ENCODE measurements at regions of chr12 and their contacts with region 1.

Region 1: DNA sequence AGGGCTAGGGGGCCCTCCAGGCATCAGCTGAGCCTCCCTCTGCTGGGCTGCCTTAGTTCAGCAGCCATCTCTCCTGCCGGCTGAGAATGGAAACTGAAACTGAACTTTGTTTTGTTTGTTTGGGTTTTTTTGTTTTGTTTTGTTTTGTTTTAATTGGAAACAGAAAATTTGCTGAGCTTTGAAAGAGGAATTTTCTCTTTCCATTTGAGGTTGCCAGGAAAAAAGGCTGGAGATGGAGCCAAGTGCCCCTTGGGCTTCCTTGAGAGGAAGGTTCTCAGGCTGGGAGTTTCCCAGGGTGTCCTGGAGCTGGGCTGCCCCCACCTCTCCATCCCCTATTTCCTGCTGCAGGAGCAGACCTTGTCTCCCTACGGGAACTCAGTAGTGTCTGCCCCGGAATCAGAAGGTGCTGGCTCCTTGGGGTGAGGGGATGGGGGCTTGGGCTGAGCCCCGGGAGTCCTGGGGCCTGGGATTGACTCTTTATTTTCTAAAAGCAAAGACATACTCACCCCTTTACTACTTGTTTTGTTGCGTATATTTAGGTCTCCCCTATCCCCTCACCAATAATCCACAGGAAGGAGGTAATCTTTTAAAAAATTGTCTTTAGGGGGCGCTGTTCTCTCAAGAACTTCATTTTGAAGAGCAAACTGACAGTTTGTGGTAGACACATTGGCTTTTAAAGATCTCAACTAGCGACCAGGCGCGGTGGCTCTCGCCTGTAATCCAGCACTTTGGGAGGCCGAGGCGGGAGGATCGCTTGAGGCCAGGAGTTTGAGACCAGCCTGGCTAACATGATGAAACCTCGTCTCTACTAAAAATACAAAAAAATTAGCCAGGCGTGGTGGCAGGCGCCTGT is 21.3 kb upstream of the OASL start:
- DNase-seq: peak; percentile 65
- H3K4me3 Mint-ChIP-seq: peak overlapping the region; percentile 74
- H3K27ac Mint-ChIP-seq: peak overlapping the region; percentile 93
- H3K4me1 Mint-ChIP-seq: peaks cover 30% of the 10 kb centered on the region
- H3K27me3 Mint-ChIP-seq: peaks cover 2% of the 10 kb centered on the region

Region 2: DNA sequence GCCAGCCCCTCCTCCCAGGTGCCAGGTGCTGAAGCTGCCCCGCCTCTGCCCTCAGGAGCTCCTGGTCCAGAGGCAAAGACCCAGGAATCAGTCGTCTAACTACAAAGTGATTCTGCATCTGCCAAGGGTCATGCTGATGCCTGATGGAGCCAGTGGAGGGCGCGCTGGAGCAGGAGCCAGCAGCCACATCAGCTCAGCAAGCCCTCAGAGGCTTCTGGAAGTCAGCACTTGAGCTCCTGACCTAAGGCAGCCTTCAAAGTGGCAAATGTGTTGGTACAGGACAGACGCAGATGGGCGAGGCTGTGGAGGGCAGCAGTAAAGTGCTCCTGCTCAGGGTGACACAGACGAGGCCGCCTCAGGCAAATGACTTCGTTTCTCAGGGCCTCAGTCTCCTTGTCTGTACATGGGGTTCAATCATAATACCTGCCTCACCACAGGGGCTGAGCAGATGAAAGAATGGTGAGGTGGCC is 55.0 kb before region 1 on chr12:
- intact Hi-C with region 1: loop called (anchors 1 kb)
- DNase-seq: peak; percentile 32
- H3K4me3 Mint-ChIP-seq: no peak overlapping the region
- H3K27ac Mint-ChIP-seq: no peak overlapping the region
- H3K4me1 Mint-ChIP-seq: peaks cover 4% of the 10 kb centered on the region
- H3K27me3 Mint-ChIP-seq: no peaks in the 10 kb centered on the region

Region 3: DNA sequence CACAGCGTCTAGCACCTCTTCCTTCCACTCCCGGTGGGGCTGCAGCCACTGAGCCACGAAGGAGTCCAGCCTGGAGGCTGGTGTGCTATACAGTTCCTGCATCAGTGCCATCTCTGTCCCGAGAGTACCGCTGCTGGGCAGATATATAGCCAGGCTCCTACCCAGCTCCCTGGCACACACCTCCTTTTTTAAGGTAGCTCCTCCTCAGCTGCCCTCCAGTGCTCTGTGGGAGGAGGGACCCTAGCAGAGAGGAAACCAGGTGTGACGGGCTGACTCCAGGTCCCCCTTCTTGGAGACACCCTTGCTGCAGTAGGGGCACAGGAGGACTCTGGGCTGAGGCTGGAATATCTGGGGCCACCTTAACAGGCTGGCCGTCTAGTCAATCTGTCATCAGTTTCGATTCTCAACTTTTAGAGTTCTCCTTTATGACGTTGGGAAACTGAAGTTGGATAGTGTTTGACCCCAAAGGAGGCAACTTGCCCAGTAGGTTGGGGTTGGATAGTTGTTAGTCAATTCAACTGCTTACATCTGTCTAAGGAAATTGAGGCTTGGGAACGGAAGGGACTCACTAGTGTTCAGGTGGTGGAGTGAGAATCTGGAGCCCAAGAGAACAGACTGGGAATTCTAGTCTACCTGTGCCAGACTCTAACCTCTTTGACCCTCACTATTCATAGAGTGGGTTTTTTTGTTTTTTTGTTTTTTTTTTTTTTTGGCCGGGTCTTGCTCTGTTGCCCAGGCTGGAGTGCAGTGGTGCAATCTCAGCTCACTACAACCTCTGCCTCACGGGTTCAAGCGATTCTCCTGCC is 21.3 kb before region 1 on chr12 and contains the start of gene OASL:
- intact Hi-C with region 1: loop called (anchors 1 kb)
- DNase-seq: peak; percentile 54
- H3K4me3 Mint-ChIP-seq: peak within 1 kb of the TSS; percentile 91
- H3K27ac Mint-ChIP-seq: peak within 1 kb of the TSS; percentile 84
- H3K4me1 Mint-ChIP-seq: peaks cover 51% of the 10 kb centered on the region
- H3K27me3 Mint-ChIP-seq: peaks cover 12% of the 10 kb centered on the region
- total RNA-seq, gene OASL: 2.4 and 3.1 TPM in 2 replicates

Region 4: DNA sequence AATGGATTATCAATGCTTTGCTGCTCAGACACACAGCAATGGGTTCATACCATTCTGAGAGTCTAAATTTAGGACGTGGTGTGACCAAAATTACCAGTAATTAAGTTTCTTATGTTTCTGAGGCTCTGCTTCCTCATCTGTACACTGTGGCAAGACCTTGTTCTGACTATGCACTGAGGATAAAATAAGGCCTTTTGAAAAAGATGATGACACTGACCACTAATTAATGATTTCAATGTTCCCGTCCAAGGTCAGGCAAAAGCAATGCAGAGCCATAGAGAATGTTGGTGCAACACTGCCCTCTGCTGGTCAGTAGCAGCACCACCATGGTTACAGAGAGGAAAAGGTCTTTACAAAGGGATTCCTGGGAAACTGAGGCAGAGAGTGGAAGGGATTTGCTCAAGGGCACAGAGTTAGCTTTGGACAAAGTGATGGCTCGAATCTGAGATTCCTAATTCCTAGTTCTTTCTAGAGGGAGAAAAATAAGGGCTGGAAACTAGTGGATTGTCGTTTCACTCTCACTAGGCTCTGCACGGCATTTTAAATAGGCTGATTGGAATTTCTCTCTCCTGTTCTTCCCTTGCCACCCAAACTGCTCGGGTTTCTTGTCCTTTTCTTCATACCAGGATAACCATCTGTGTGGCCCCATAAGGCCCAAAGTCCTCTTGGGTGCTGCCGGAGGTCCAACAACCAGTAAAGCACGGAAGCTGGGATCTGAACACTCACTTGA is 50.0 kb after region 1 on chr12:
- intact Hi-C with region 1: loop called (anchors 1 kb)
- DNase-seq: peak; percentile 40
- H3K4me3 Mint-ChIP-seq: no peak overlapping the region
- H3K27ac Mint-ChIP-seq: peak overlapping the region; percentile 21
- H3K4me1 Mint-ChIP-seq: peaks cover 8% of the 10 kb centered on the region
- H3K27me3 Mint-ChIP-seq: peaks cover 4% of the 10 kb centered on the region

Region 5: GRCh38 chr12:121230538-121230907 is 170.1 kb after region 1 on chr12:
- intact Hi-C with region 1: loop called (anchors 1 kb)
- DNase-seq: no peak
- H3K4me3 Mint-ChIP-seq: no peak overlapping the region
- H3K27ac Mint-ChIP-seq: no peak overlapping the region
- H3K4me1 Mint-ChIP-seq: peaks cover 18% of the 10 kb centered on the region
- H3K27me3 Mint-ChIP-seq: no peaks in the 10 kb centered on the region

Measured in activated T-helper 1 cell treated with anti-CD3 and anti-CD28 coated beads, Interleukin-12 subunit alpha, Interleukin-12 subunit beta, Interleukin-2, Interleukin-4 antibody, amounts not matched to agents 30 ng/mL and 10 ng/mL and 1 ng/mL, durations not matched to agents 14 hours and 24 hours and 36 hours (primary cell).